ENCODE measurements at regions of chr11 and their contacts with region 1.

Region 1: GRCh38 chr11:7892840-7893254 is 38.2 kb downstream of the OR10A6 start:
- DNase-seq: peak; percentile 66
- H3K4me3 Mint-ChIP-seq: no peak overlapping the region
- H3K27ac Mint-ChIP-seq: peak overlapping the region; percentile 54
- H3K4me1 Mint-ChIP-seq: peaks cover 26% of the 10 kb centered on the region
- H3K27me3 Mint-ChIP-seq: no peaks in the 10 kb centered on the region
- CTCF ChIP-seq: peak; percentile 68

Region 2: GRCh38 chr11:7904914-7905313 is 12.1 kb after region 1 on chr11:
- CTCF ChIA-PET with region 1: interaction called, 94 read pairs
- POLR2A ChIA-PET with region 1: interaction called, 7 read pairs
- intact Hi-C with region 1: no loop called
- DNase-seq: peak; percentile 8
- H3K4me3 Mint-ChIP-seq: no peak overlapping the region
- H3K27ac Mint-ChIP-seq: no peak overlapping the region
- H3K4me1 Mint-ChIP-seq: peaks cover 26% of the 10 kb centered on the region
- H3K27me3 Mint-ChIP-seq: no peaks in the 10 kb centered on the region
- CTCF ChIP-seq: no peak

Region 3: DNA sequence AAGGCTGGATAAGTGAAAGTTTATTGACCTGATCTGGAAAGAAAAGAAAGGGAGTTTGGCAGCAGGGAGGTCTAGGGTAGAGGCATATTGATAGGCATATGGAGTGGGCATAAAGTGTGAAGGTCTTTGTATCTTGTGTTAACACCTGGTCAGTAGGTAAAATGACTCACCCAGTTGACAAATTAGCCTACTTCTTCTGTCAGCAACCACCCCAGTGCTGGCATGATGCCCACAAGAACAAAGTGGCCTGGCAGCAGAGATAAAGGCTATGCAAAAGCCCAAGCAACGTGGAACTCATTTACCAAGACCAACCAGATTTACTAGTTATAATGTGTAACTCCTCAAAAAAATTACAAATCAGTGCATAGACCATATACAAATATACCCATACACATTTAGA is 43.8 kb after region 1 on chr11:
- CTCF ChIA-PET with region 1: interaction called, 13 read pairs
- POLR2A ChIA-PET with region 1: no interaction called
- intact Hi-C with region 1: no loop called
- DNase-seq: peak; percentile 43
- H3K4me3 Mint-ChIP-seq: no peak overlapping the region
- H3K27ac Mint-ChIP-seq: peak overlapping the region; percentile 17
- H3K4me1 Mint-ChIP-seq: peaks cover 6% of the 10 kb centered on the region
- H3K27me3 Mint-ChIP-seq: no peaks in the 10 kb centered on the region
- CTCF ChIP-seq: no peak

Region 4: DNA sequence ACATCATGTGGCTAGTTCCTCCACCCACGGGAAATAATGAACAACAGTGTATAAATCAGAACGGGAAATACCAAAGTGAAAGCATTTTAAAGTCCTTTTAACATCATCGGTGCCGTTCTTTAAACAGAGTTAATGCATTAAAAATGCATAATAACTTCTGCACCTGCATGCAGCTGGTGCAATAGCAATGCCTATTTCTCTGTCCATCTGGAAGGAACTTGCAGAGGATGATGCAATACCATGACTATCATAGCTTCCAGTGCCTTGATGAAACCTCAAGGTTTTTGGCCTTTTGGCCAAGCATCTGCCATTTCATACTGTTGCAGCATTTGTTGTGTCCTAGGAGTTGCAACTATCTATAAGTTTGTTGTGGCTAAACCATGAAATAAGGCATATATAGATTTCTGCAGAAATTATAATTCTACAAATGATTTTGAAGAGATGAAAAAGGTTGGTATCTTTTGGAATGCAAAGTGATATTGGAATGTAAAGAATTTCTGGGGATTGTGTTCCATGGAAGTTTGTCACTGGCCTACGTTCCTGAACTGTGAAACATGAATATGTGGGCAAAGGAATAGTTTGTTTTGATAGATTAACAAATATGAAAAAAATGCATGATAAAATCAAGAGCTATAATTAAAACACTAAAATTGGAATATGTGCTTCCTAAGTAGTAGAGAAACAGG is 84.5 kb after region 1 on chr11:
- CTCF ChIA-PET with region 1: interaction called, 260 read pairs
- POLR2A ChIA-PET with region 1: interaction called, 3 read pairs
- intact Hi-C with region 1: no loop called
- DNase-seq: peak; percentile 55
- H3K4me3 Mint-ChIP-seq: no peak overlapping the region
- H3K27ac Mint-ChIP-seq: peak overlapping the region; percentile 79
- H3K4me1 Mint-ChIP-seq: peaks cover 23% of the 10 kb centered on the region
- H3K27me3 Mint-ChIP-seq: no peaks in the 10 kb centered on the region
- CTCF ChIP-seq: no peak

Region 5: DNA sequence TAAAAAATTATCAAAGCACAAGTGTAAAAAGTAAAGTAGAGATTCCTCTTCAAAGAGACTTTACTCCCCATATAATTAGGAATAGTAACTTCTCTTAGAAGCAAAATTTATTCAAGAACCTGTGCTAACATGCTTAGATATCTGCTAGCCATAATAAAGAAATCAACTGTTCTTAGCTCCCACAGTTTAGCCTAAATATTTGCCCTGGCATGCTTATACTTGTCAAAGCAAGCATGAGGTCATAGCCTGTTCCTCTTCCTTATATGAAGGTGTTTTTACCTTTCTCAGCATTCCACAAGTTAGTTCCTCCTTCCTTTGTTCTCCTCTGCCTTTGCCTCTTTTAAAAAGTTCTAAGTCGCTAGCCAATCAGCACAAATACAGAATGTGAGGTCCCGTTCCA is 245.7 kb after region 1 on chr11:
- CTCF ChIA-PET with region 1: no interaction called
- POLR2A ChIA-PET with region 1: no interaction called
- intact Hi-C with region 1: no loop called
- DNase-seq: peak; percentile 53
- H3K4me3 Mint-ChIP-seq: peak overlapping the region; percentile 55
- H3K27ac Mint-ChIP-seq: peak overlapping the region; percentile 85
- H3K4me1 Mint-ChIP-seq: peaks cover 10% of the 10 kb centered on the region
- H3K27me3 Mint-ChIP-seq: no peaks in the 10 kb centered on the region
- CTCF ChIP-seq: no peak

Region 6: DNA sequence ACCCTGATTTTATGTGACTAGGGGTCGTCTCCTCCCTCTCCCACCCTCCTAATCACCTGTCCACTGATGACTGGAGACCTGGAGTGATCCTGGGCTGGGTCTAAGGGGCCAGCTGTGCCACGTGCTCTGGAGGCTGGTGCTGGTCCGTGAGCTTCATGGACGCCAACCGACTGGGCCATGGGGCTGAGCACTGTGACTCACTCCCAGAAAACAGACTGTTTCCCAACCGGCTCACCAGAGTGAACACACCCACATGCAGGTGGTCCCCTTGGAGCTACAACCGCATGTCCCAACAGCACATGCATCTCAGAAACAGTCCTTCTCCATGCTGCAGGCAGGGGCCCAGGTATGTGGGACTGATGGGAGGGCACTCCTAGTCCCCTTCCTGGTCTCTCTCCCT is 384.8 kb after region 1 on chr11:
- CTCF ChIA-PET with region 1: no interaction called
- POLR2A ChIA-PET with region 1: no interaction called
- intact Hi-C with region 1: no loop called
- DNase-seq: peak; percentile 40
- H3K4me3 Mint-ChIP-seq: no peak overlapping the region
- H3K27ac Mint-ChIP-seq: no peak overlapping the region
- H3K4me1 Mint-ChIP-seq: no peaks in the 10 kb centered on the region
- H3K27me3 Mint-ChIP-seq: peaks cover 10% of the 10 kb centered on the region
- CTCF ChIP-seq: no peak